PC-9 (cell line): ENCODE measurements at regions of chr7 and their contacts with region 1.

Region 1: GRCh38 chr7:11427686-11428273 is 404.2 kb downstream of the THSD7A start:
- DNase-seq: peak in 1 of 2 experiments; percentile 54
- H3K4me3 ChIP-seq: no peak overlapping the region
- H3K27ac ChIP-seq: no peak overlapping the region
- H3K4me1 ChIP-seq: no peaks in the 10 kb centered on the region
- H3K27me3 ChIP-seq: no peaks in the 10 kb centered on the region
- CTCF ChIP-seq: peak; percentile 90

Region 2: GRCh38 chr7:12067141-12067831 is 639.5 kb after region 1 on chr7:
- CTCF ChIA-PET with region 1: interaction called, 6 read pairs
- POLR2A ChIA-PET with region 1: no interaction called
- intact Hi-C with region 1: loop called (anchors 1 kb)
- DNase-seq: peak in 1 of 2 experiments; percentile 72
- H3K4me3 ChIP-seq: no peak overlapping the region
- H3K27ac ChIP-seq: peak overlapping the region; percentile 99
- H3K4me1 ChIP-seq: peaks cover 23% of the 10 kb centered on the region
- H3K27me3 ChIP-seq: no peaks in the 10 kb centered on the region
- CTCF ChIP-seq: peak; percentile 61

Region 3: GRCh38 chr7:12174931-12175330 is 747.2 kb after region 1 on chr7:
- CTCF ChIA-PET with region 1: no interaction called
- POLR2A ChIA-PET with region 1: no interaction called
- intact Hi-C with region 1: loop called (anchors 10 kb)
- DNase-seq: no peak
- H3K4me3 ChIP-seq: no peak overlapping the region
- H3K27ac ChIP-seq: no peak overlapping the region
- H3K4me1 ChIP-seq: peaks cover 8% of the 10 kb centered on the region
- H3K27me3 ChIP-seq: no peaks in the 10 kb centered on the region
- CTCF ChIP-seq: no peak

Region 4: DNA sequence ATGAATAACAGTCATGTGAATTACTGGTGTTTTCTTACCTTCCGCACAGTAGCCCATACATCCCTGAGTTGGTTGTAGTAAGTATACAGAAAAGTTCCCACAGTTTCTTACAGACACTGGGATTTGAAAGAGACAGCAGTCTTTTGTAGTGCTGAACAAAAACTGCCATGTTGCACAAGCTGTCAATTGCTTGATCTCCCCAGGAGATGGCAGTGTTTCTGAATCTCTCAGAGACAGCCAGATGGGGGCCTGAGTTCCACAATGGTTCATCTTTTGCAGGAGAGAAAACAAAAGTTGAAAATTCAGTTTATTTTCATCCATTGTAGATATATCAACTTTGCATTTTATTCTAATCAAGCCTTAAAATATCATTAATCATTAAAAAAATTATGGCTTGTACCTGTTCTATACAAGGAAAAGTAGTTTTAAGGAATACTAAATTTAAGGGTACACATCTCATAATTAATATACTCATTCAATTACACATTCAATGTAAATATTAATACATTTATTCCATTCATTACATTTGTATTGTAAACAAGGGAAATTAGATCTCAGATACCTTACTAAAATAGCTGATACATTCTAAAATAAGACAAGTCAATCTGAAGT is 961.4 kb after region 1 on chr7:
- CTCF ChIA-PET with region 1: no interaction called
- POLR2A ChIA-PET with region 1: no interaction called
- intact Hi-C with region 1: loop called (anchors 5 kb)
- DNase-seq: peak; percentile 50 to 52
- H3K4me3 ChIP-seq: no peak overlapping the region
- H3K27ac ChIP-seq: no peak overlapping the region
- H3K4me1 ChIP-seq: no peaks in the 10 kb centered on the region
- H3K27me3 ChIP-seq: no peaks in the 10 kb centered on the region
- CTCF ChIP-seq: peak; percentile 90